ENCODE measurements at regions of chr6 and their contacts with region 1.

Region 1: GRCh38 chr6:1609648-1610496 is at the start of gene FOXC1:
- DNase-seq: peak; percentile 98
- total RNA-seq, gene FOXC1: 73.5 and 88.4 TPM in 2 replicates

Region 2: GRCh38 chr6:1662534-1662933 is 52.7 kb after region 1 on chr6:
- in situ Hi-C with region 1: no loop called
- DNase-seq: no peak

Region 3: DNA sequence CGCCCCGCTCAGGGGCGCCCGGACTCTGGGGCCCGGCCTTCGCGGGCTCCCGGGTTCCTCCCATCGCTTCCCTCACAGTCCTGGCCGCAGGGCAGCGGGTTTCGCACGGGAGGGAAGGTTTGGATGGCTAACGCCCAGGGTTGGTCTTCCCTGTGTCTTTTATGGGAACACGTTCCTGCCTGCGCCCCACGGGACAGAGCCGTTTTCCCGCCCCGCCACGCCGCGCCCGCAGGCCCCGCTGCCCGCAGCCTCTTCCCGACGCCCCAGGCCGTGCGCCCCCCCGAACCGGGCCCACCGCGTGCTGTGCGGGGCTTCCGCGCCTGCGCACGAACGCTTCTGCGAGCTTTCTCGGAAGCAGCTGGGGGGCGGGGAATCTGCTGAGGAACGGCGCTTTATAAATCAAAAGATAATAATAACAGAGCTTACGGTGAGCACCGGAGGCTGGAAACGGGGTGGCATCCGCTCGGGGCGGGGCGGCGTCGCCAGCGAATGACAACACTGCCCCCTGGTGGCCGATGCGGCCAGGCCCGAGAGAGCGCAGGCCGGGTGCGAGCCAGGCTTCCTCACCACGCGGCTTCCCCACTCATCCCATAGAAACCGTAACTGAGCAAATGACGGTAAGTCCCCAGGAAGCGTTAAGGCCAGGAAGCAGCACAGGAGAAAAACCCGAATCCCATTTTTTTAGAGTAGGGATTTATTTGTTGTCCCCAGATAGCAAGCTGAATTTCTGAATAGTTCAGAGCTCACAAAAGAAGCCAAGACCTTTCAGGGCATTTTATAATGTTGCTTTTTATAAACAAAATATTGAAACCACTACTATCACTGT is 1024.5 kb after region 1 on chr6:
- in situ Hi-C with region 1: loop called (anchors 10 kb)
- DNase-seq: peak; percentile 92

Measured in Caki2 (cell line).